Psoas muscle (tissue), 8 donors: ENCODE measurements at regions of chr11 and their contacts with region 1.

Region 1: DNA sequence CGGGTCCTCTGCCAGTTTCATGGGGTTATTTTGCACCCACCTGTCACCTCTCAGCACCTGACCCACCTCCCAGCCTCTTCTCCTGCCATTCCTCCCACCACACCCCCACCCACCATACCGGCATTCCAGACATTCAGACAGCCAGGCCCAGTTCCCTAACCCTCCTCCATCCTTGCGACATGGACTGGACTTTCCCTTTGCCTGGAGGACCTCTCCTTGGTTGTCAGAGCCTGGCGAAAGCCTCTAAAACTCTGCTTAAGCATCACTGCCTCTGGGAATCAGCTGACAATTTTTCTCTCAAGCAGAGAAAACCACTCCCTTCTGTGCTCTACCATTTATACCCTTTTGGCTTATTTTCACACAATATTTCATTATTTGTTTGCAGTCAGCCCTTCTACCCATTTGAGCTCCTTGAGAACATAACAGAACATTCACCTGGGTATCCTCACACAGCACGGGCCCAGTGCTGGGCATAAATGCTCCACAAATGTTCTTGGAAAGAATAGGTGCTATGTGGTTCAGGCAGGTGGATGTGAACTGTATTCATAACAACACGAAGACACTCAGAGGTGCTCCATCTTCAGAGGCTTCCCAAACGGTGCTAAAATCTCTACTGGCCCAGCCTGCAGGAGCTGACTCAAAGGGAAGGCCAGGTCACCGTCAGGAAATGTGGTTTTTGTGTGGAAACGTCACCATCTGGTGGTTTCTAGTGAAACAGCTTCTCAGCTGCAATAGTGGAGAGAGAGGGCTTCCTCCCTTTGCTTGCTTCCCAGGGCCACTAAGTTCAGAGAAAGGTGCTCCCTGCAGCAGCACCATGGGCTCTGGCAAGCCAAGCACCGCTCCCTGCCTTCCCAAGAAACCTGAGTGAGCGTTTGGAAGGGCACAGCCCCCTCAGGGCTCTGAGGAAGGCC is 10.4 kb downstream of the SPATA19 start:
- DNase-seq: no peak
- ATAC-seq: peak; percentile 61 to 76 (median 66)
- H3K4me3 ChIP-seq: no peak overlapping the region
- H3K27ac ChIP-seq: no peak overlapping the region
- H3K4me1 ChIP-seq: no peaks in the 10 kb centered on the region
- H3K27me3 ChIP-seq: peaks cover 0 to 3% (median 0%) of the 10 kb centered on the region in 3 donors
- CTCF ChIP-seq: peak; percentile 60

Region 2: DNA sequence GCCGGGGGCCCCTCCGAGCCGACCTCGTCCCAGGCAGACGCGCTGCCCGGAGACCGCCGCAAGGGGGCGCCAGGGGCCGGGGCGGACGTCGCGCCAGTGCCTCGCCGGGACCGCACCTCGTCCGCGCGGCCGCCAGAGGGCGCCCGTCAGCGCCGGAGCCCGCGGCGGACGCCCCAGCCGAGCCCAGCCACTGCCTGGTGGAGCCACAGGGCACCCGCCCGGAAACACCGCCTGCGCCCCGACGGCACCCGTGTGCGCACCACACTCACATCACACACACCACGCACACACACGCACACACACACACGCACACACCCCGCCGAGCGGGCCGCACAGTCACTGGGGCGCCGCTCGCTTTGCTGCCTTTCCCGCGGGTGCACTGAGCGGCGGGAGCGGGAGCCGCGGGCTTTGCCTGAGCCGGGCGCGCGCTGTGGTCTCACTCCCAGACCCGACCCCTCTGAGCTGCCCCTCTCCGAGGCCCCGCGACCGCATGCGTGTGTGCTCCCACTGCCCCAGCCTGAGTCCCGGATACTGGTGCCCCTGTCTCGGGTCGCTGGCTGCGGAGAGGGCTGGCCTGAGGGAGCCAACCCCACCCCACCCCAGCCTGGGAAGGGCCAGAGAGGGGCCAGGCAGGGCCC is 752.0 kb before region 1 on chr11:
- intact Hi-C with region 1: loop called (anchors 2 to 10 kb)
- DNase-seq: peak; percentile 65 to 74
- ATAC-seq: peak; percentile 72 to 96 (median 85)
- H3K4me3 ChIP-seq: peak overlapping the region; percentile 52
- H3K27ac ChIP-seq: no peak overlapping the region
- H3K4me1 ChIP-seq: no peaks in the 10 kb centered on the region
- H3K27me3 ChIP-seq: peaks cover 4 to 38% (median 17%) of the 10 kb centered on the region in 3 donors
- CTCF ChIP-seq: peak; percentile 70

Region 3: GRCh38 chr11:133677387-133677786 is 157.6 kb before region 1 on chr11:
- intact Hi-C with region 1: no loop called
- DNase-seq: no peak
- ATAC-seq: no peak
- H3K4me3 ChIP-seq: no peak overlapping the region
- H3K27ac ChIP-seq: no peak overlapping the region
- H3K4me1 ChIP-seq: no peaks in the 10 kb centered on the region
- H3K27me3 ChIP-seq: peaks cover 0 to 9% (median 4%) of the 10 kb centered on the region in 3 donors
- CTCF ChIP-seq: no peak

Region 4: GRCh38 chr11:133705074-133705648 is 129.8 kb before region 1 on chr11:
- intact Hi-C with region 1: no loop called
- DNase-seq: no peak
- ATAC-seq: no peak
- H3K4me3 ChIP-seq: no peak overlapping the region
- H3K27ac ChIP-seq: no peak overlapping the region
- H3K4me1 ChIP-seq: no peaks in the 10 kb centered on the region
- H3K27me3 ChIP-seq: peaks cover 0 to 6% (median 0%) of the 10 kb centered on the region in 3 donors
- CTCF ChIP-seq: no peak